A549 (cell line): ENCODE measurements at regions of chr1 and their contacts with region 1.

Region 1: GRCh38 chr1:85307987-85308832 is 31.8 kb upstream of the BCL10 start:
- DNase-seq: peak; percentile 69 to 84
- ATAC-seq: peak; percentile 98 to 100
- H3K4me3 ChIP-seq: no peak overlapping the region
- H3K27ac ChIP-seq: peak overlapping the region; percentile 59 to 74; a peak in 4 of 6 replicates
- H3K4me1 ChIP-seq: peaks cover 7% of the 10 kb centered on the region; the same call in 2 of the 3 replicates
- CTCF ChIP-seq: peak; percentile 98
- EP300 ChIP-seq: no peak
- POLR2A ChIP-seq: no peak
- RAD21 ChIP-seq: peak; percentile 99

Region 2: GRCh38 chr1:85134576-85135395 is 173.4 kb before region 1 on chr1:
- CTCF ChIA-PET with region 1: no interaction called
- POLR2A ChIA-PET with region 1: no interaction called
- DNase-seq: no peak
- ATAC-seq: no peak; a peak in 1 of 6 replicates
- H3K4me3 ChIP-seq: no peak overlapping the region
- H3K27ac ChIP-seq: no peak overlapping the region
- H3K4me1 ChIP-seq: peaks cover 15% of the 10 kb centered on the region
- CTCF ChIP-seq: no peak
- EP300 ChIP-seq: no peak
- POLR2A ChIP-seq: no peak
- RAD21 ChIP-seq: no peak

Region 3: DNA sequence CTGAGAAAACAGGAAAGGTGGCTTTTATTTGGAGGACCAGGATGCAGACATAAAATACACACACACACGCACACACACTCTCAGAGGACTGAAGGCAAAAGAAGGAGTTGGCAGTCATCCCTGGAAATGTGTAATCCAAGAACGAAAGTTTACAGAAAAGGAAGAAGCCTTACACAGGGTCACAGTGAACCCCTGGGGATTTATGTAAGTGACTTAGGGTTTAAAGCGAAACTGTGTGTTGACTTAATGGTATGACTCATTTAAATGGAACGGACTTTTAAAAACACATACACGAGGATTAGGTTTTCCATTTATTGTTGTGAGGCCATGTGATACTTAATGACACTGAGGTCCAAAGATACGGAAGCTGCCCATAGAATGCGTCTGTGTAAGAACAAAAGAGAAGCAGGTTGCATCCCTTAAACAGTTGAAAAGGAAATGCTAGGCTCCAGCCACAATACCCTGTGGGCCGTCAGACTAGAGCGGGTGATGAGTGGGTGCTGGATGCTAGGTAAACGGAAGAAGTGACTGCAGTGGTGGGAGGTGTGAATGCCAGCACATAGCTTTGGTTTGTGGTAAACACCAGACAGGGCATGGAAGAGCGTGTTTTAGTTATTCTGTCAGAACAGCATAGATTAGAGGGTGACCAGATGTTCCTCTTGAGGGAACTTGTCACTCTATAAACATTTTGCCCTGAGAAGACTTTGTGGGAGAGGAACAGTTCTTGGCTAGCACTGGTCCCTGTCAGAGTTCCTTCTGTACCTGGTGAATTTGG is 10.2 kb before region 1 on chr1:
- CTCF ChIA-PET with region 1: interaction called, 46 read pairs
- POLR2A ChIA-PET with region 1: no interaction called
- DNase-seq: peak; percentile 59 to 86
- ATAC-seq: peak; percentile 70 to 84
- H3K4me3 ChIP-seq: no peak overlapping the region
- H3K27ac ChIP-seq: peak overlapping the region; percentile 65 to 80
- H3K4me1 ChIP-seq: peaks cover 20% of the 10 kb centered on the region
- CTCF ChIP-seq: no peak
- EP300 ChIP-seq: peak in 1 of 2 experiments; percentile 16; a peak in 1 of 5 replicates
- POLR2A ChIP-seq: no peak
- RAD21 ChIP-seq: no peak

Region 4: DNA sequence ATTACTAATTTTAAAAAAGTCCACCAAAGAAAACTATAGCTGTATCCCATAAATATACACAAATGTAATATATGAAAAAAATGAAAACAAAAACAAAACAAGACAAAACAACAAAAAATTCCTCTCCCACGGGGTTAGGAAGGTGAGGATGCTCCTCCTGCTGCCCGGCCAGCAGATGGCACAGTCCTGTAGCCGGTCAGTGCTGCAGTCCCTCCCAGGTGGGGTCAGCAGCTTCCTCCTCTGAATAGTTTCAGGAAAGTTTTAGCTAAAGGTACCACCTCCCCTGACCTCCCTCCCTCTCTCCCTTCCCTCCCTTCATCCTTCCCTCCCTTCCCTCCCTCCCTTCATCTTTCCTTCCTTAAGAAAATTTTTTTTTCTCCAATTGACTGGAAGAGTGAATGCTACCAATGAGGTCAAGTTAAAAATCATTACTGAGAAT is 36.1 kb after region 1 on chr1:
- CTCF ChIA-PET with region 1: interaction called, 22 read pairs
- POLR2A ChIA-PET with region 1: no interaction called
- DNase-seq: peak; percentile 62 to 65
- ATAC-seq: peak; percentile 94 to 99
- H3K4me3 ChIP-seq: no peak overlapping the region
- H3K27ac ChIP-seq: peak overlapping the region; percentile 34 to 69; a peak in 3 of 6 replicates
- H3K4me1 ChIP-seq: peaks cover 22% of the 10 kb centered on the region
- CTCF ChIP-seq: peak; percentile 81
- EP300 ChIP-seq: no peak
- POLR2A ChIP-seq: no peak
- RAD21 ChIP-seq: peak; percentile 78 to 79

Region 5: GRCh38 chr1:85406887-85407533 is 98.8 kb after region 1 on chr1:
- CTCF ChIA-PET with region 1: interaction called, 17 read pairs
- POLR2A ChIA-PET with region 1: no interaction called
- DNase-seq: peak; percentile 50 to 68
- ATAC-seq: peak; percentile 68 to 94; a peak in 5 of 6 replicates
- H3K4me3 ChIP-seq: peak overlapping the region; percentile 23
- H3K27ac ChIP-seq: peak overlapping the region; percentile 82 to 85
- H3K4me1 ChIP-seq: peaks cover 22% of the 10 kb centered on the region
- CTCF ChIP-seq: no peak
- EP300 ChIP-seq: no peak
- POLR2A ChIP-seq: no peak
- RAD21 ChIP-seq: no peak

Region 6: DNA sequence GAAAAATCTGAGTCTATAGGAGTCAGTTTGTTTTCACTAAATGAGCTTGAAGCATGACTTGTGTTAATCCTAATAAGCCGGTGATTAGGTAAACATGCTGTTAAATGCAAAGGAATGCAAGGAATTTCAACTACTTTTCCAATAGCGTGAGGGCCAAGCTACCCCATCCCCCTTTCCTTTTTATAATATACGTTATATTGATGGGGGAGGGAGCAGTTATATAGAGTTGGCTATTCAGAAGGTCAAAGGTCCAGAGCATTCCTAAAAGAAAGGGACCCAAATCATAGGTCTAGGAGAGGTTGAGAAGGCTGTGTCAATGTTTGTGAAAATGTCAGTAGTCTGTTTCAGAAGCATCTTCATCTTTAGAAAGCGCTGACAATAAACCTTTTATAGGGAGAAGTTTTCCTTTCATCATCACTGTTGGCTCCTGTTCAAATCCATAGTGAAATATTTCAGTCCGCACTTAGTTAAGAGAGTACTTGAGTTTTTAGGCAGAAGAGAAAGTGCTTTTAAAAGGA is 276.1 kb after region 1 on chr1:
- CTCF ChIA-PET with region 1: interaction called, 12 read pairs
- POLR2A ChIA-PET with region 1: interaction called, 12 read pairs
- DNase-seq: peak in 1 of 2 experiments; percentile 69
- ATAC-seq: peak; percentile 2 to 5; a peak in 3 of 6 replicates
- H3K4me3 ChIP-seq: peak overlapping the region; percentile 83; the same call in 2 of the 3 replicates
- H3K27ac ChIP-seq: peak overlapping the region; percentile 99 to 100
- H3K4me1 ChIP-seq: peaks cover 44% of the 10 kb centered on the region
- CTCF ChIP-seq: no peak
- EP300 ChIP-seq: peak in 1 of 2 experiments; percentile 32; a peak in 1 of 5 replicates
- POLR2A ChIP-seq: no peak
- RAD21 ChIP-seq: 0 out of 5 replicates have a peak, but pooled peaks of 1 of the 2 experiments have one; percentile 11

Region 7: GRCh38 chr1:85692730-85693314 is 384.6 kb after region 1 on chr1:
- CTCF ChIA-PET with region 1: interaction called, 37 read pairs
- POLR2A ChIA-PET with region 1: no interaction called
- DNase-seq: peak in 1 of 2 experiments; percentile 45
- ATAC-seq: peak; percentile 43 to 61; a peak in 4 of 6 replicates
- H3K4me3 ChIP-seq: no peak overlapping the region
- H3K27ac ChIP-seq: peak overlapping the region; percentile 52 to 65
- H3K4me1 ChIP-seq: peaks cover 22% of the 10 kb centered on the region; the same call in 2 of the 3 replicates
- CTCF ChIP-seq: peak; percentile 64
- EP300 ChIP-seq: no peak
- POLR2A ChIP-seq: no peak
- RAD21 ChIP-seq: peak; percentile 65 to 82